Activated CD4-positive, alpha-beta T cell treated with anti-CD3 and anti-CD28 coated beads for 36 hours (primary cell): ENCODE measurements at regions of chrX and their contacts with region 1.

Region 1: DNA sequence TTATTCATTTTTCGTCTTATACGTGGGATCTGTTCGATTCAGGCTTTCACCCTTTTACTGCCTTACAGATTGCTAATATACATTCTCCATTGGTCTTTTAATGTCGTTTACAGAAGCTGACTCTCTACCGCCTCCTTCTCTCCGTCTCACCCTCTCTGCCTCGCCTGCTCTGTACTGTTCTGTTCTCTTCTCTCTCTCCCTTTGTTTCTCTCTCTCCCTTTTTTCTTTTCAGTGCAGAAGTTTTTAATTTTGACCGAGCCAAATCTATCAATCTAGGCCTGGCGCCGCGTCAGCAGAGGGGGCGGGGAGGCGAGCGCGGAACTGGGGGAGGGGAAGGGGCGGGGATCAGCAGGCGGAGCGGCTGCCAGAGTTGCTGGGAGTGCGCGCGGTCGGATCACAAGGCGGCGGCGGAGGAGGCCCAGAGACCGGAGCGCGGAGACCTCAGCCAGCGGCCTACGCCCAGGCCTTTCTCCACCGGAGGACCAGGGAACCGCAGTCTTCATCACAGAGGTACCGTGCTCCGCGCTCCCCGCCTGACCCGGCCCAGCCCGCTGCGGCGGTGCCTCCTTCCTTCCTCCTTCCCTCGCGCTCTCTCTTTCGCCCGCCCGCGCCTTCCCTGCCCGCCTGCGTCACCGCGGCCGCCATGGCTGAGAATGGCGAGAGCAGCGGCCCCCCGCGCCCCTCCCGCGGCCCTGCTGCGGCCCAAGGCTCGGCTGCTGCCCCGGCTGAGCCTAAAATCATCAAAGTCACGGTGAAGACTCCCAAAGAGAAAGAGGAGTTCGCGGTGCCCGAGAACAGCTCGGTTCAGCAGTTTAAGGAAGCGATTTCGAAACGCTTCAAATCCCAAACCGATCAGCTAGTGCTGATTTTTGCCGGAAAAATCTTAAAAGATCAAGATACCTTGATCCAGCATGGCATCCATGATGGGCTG is at the start of gene UBQLN2:
- DNase-seq: peak; percentile 90
- ATAC-seq: peak; percentile 69
- H3K4me3 Mint-ChIP-seq: peak within 1 kb of the TSS; percentile 96
- H3K27ac Mint-ChIP-seq: peak within 1 kb of the TSS; percentile 100
- H3K4me1 Mint-ChIP-seq: peaks cover 2% of the 10 kb centered on the region
- H3K27me3 Mint-ChIP-seq: no peaks in the 10 kb centered on the region
- total RNA-seq, gene UBQLN2: 32.2 to 36.6 TPM

Region 2: DNA sequence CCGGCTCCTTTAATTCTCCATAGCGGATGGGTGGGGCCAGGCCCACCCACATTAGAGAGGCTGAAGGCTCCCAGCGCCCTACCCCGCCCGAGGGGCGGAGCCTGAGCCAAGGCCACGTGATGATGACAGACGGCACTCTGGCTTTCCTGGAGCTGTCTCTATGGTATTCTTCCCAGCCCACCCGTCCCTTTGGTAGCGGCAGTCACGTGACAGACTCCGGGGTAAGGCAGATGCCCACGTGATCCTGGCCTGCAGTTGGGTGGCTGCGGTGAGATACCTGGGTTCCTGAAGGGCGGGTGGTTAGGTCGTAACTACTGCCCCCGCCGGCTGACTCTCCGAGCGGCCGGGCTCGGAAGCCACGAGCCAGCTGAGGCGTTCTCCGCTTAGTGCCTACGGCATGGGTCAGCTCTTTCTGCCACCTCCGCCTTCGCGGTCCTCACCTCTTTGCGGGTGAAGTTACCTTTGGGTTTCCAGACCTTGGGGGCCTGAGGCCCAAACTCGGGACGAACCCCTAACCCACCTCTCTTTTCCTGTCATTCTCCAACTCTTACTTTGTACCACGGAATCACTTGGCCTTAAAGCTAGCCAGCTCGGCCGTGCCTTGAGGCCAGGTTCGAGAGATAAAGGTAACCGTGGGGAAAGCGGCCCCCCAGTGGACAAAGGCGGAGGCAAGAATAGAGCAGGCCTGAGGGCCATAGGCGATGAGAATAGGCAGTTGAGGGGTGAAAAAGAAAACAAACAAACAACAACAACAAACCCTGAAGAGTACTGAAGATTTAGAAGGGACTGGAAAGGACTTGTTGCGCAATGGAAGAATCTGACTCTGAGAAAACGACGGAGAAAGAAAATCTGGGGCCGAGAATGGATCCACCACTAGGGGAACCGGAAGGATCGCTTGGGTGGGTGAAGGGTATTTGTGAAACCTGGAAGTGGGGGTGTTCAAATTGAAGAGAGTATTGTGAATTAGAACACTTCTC is 845.7 kb before region 1 on chrX and contains the start of gene RRAGB:
- CTCF ChIA-PET with region 1: no interaction called
- POLR2A ChIA-PET with region 1: no interaction called
- intact Hi-C with region 1: loop called in 1 of 2 experiments (anchors 5 kb)
- DNase-seq: peak; percentile 93
- ATAC-seq: peak; percentile 99
- H3K4me3 Mint-ChIP-seq: peak within 1 kb of the TSS; percentile 87
- H3K27ac Mint-ChIP-seq: peak within 1 kb of the TSS; percentile 87
- H3K4me1 Mint-ChIP-seq: peaks cover 33% of the 10 kb centered on the region
- H3K27me3 Mint-ChIP-seq: no peaks in the 10 kb centered on the region
- total RNA-seq, gene RRAGB: 4.3 to 5.0 TPM

Region 3: DNA sequence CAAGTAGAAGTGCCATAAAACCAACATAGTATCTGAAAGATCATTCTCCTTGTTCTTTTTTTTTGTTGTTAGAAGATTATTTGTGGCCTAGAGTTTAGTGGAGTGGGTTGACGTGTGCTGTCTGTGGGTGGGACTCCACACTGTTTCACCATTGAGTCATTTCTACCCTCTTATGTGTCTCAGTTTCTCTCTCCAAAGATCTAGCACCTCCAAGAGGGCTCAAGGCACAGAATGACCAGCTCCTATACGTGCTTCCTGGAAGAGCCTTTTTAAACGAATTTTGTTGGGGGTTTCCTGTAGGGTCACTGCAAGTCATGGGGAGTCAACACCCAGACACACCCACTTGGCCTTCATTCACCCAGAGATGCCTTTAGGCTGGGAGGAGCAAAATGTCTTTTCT is 181.2 kb before region 1 on chrX:
- CTCF ChIA-PET with region 1: no interaction called
- POLR2A ChIA-PET with region 1: no interaction called
- intact Hi-C with region 1: loop called in 1 of 2 experiments (anchors 5 kb)
- DNase-seq: peak; percentile 29
- ATAC-seq: peak; percentile 96
- H3K4me3 Mint-ChIP-seq: no peak overlapping the region
- H3K27ac Mint-ChIP-seq: peak overlapping the region; percentile 80
- H3K4me1 Mint-ChIP-seq: peaks cover 38% of the 10 kb centered on the region
- H3K27me3 Mint-ChIP-seq: no peaks in the 10 kb centered on the region

Region 4: DNA sequence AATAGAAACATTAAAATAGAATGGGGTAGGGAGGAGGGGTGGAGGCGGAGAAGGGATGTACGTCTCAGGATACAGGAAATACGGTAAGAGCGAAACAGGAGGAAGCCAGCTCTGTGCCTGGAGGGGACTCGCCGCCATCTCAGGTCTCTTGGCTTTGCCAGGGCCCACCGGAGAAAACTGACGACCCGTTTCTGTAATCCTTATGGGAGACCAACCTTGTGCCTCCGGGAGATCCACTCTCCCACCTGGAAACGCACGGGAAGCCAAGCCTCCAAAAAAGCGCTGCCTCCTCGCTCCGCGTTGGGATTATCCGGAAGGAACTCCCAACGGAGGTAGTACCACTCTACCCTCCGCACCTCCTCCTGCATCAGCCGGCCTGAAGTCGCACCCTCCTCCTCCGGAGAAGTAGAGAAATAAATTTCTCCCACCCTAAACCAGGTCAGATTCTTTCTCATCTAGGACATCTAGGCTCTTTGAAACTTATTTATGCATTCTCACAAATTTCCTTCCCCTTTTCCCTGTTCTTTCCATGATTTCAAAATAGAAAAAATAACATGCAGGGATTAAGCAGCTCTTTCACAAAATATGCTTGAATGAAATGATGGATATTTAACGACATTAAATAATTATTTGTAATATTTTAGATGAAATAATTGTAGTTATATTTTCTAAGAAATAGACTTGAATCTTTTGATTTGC is 165.8 kb after region 1 on chrX and contains the start of gene NBDY:
- CTCF ChIA-PET with region 1: interaction called, 5 read pairs
- POLR2A ChIA-PET with region 1: no interaction called
- intact Hi-C with region 1: loop called (anchors 1 to 2 kb)
- DNase-seq: peak; percentile 41
- ATAC-seq: peak; percentile 73
- H3K4me3 Mint-ChIP-seq: peak within 1 kb of the TSS; percentile 83
- H3K27ac Mint-ChIP-seq: peak within 1 kb of the TSS; percentile 91
- H3K4me1 Mint-ChIP-seq: peaks cover 24% of the 10 kb centered on the region
- H3K27me3 Mint-ChIP-seq: no peaks in the 10 kb centered on the region
- total RNA-seq, gene NBDY: 37.0 to 53.3 TPM

Region 5: GRCh38 chrX:56995271-56995994 is 431.9 kb after region 1 on chrX and contains the start of gene SPIN3:
- CTCF ChIA-PET with region 1: no interaction called
- POLR2A ChIA-PET with region 1: no interaction called
- intact Hi-C with region 1: loop called in 1 of 2 experiments (anchors 10 kb)
- DNase-seq: peak; percentile 80
- ATAC-seq: peak; percentile 95
- H3K4me3 Mint-ChIP-seq: peak within 1 kb of the TSS; percentile 84
- H3K27ac Mint-ChIP-seq: peak within 1 kb of the TSS; percentile 92
- H3K4me1 Mint-ChIP-seq: peaks cover 30% of the 10 kb centered on the region
- H3K27me3 Mint-ChIP-seq: no peaks in the 10 kb centered on the region
- total RNA-seq, gene SPIN3: 7.7 to 10.0 TPM